PC-3 (cell line): ENCODE measurements at regions of chr4 and their contacts with region 1.

Region 1: GRCh38 chr4:129912432-129912831 is 816.5 kb downstream of the C4orf33 start:
- DNase-seq: peak; percentile 38
- ATAC-seq: peak; percentile 70
- H3K4me3 ChIP-seq: no peak overlapping the region
- H3K27ac ChIP-seq: peak overlapping the region; percentile 54
- H3K4me1 ChIP-seq: peaks cover 7% of the 10 kb centered on the region; the same call in 1 of the 2 replicates
- H3K27me3 ChIP-seq: no peaks in the 10 kb centered on the region
- CTCF ChIP-seq: no peak

Region 2: DNA sequence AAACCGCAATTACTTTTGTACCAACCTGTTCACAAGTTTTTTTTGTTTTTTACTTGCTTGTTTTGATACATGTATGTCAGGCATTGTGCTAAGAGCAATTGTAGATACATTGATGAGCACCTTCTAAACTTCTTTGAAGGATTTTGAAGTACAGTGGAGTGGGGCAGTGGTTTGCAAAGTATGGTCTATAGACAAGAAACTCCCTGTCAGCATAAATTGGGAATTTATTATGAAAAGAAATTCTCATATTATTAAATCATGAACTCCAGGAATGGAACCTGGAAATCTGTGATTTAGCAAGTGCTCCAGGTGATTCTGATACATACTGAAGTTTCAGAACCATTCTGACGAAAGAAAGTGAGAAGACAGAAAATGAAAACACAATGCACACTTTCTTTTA is 83.1 kb before region 1 on chr4:
- CTCF ChIA-PET with region 1: no interaction called
- POLR2A ChIA-PET with region 1: no interaction called
- intact Hi-C with region 1: loop called (anchors 1 kb)
- DNase-seq: no peak
- ATAC-seq: no peak
- H3K4me3 ChIP-seq: no peak overlapping the region
- H3K27ac ChIP-seq: no peak overlapping the region
- H3K4me1 ChIP-seq: no peaks in the 10 kb centered on the region; the same call in 1 of the 2 replicates
- H3K27me3 ChIP-seq: no peaks in the 10 kb centered on the region
- CTCF ChIP-seq: no peak

Region 3: DNA sequence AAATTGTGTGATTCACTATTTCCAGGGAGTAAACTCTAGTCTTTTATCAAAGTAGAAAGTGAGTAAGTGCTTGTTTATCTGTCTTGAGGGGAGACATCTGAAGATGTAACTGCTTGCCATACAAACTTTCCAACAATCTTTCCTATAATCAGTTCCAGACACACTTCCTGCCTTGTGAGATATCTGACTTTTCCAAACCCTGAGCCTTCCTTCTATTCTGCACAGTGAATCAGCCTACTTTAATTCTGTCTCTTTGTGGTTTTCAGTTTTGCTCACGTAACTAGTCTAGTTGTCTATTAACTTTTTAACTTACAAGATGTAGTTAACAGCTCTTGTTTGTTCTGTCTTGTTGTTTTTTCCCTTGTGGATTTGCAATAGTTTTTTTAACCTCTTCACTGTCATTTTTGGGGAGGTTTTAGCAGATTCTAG is 131.3 kb after region 1 on chr4:
- CTCF ChIA-PET with region 1: no interaction called
- POLR2A ChIA-PET with region 1: no interaction called
- intact Hi-C with region 1: no loop called
- DNase-seq: no peak
- ATAC-seq: no peak
- H3K4me3 ChIP-seq: no peak overlapping the region
- H3K27ac ChIP-seq: no peak overlapping the region
- H3K4me1 ChIP-seq: no peaks in the 10 kb centered on the region
- H3K27me3 ChIP-seq: no peaks in the 10 kb centered on the region
- CTCF ChIP-seq: no peak

Region 4: DNA sequence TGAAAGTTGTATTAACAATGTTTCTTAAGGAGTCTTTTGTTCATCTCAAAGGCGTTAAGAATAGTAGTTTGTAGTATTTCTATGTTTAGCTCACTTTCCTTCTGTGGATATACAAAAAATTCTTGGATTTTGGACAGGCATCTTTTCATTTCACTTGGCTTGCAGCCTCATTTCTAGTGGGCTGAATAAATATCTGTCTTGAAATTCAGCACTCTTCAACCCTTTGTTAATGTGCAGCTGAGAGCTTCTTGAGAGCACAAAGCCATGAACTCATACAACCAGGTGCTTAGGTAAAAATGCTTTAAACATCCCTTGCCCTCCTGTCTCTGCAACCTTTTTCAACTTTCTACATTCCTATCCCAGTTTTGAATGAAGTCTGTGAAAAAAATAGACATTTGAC is 186.7 kb after region 1 on chr4:
- CTCF ChIA-PET with region 1: no interaction called
- POLR2A ChIA-PET with region 1: no interaction called
- intact Hi-C with region 1: no loop called
- DNase-seq: no peak
- ATAC-seq: no peak
- H3K4me3 ChIP-seq: no peak overlapping the region
- H3K27ac ChIP-seq: no peak overlapping the region
- H3K4me1 ChIP-seq: no peaks in the 10 kb centered on the region
- H3K27me3 ChIP-seq: no peaks in the 10 kb centered on the region
- CTCF ChIP-seq: no peak